Activated CD4-positive, alpha-beta memory T cell treated with anti-CD3 and anti-CD28 coated beads, Interleukin-2, amount 10 ng/mL, durations not matched to agents 7 days and 5 days (primary cell): ENCODE measurements at regions of chr17 and their contacts with region 1.

Region 1: GRCh38 chr17:48593840-48594537 is 410 bp upstream of the HOXB5 start:
- DNase-seq: peak; percentile 84
- H3K4me3 Mint-ChIP-seq: peak overlapping the region; percentile 71
- H3K27ac Mint-ChIP-seq: no peak overlapping the region
- H3K4me1 Mint-ChIP-seq: peaks cover 53% of the 10 kb centered on the region
- H3K27me3 Mint-ChIP-seq: peaks cover 86% of the 10 kb centered on the region

Region 2: GRCh38 chr17:48307814-48308411 is 286.1 kb before region 1 on chr17:
- CTCF ChIA-PET with region 1: interaction called, 27 read pairs
- POLR2A ChIA-PET with region 1: no interaction called
- DNase-seq: peak; percentile 54
- H3K4me3 Mint-ChIP-seq: no peak overlapping the region
- H3K27ac Mint-ChIP-seq: no peak overlapping the region
- H3K4me1 Mint-ChIP-seq: peaks cover 7% of the 10 kb centered on the region
- H3K27me3 Mint-ChIP-seq: no peaks in the 10 kb centered on the region

Region 3: DNA sequence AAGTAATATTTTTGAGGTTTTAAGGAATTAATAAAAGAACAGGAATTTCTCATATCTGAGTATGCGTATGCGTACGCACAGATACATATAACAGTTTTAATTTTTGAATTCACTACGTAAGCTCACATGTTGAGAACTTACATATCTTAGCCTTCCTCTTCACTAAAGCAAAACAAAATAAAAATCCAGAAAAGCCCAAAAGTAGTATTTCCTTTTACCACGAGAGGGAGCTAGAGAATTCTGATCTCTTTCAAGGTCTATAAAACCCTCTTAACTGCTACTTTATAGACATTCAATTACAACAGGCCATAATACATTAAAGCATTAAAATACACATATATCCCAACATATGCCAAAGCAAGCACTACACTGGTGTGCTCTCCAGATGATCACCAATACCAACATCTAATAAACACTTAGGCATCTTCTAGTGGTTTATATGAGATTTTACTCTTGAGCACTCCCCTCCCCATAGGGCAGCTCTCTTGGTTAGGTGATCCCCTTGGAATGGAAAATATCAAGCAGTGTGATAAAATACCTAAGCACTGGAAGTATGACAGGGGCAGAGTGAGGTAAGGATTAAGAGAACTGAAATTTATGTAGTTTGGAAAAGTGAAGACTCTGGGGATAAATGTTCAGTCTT is 258.0 kb before region 1 on chr17:
- CTCF ChIA-PET with region 1: interaction called, 62 read pairs
- POLR2A ChIA-PET with region 1: interaction called, 8 read pairs
- DNase-seq: no peak
- H3K4me3 Mint-ChIP-seq: no peak overlapping the region
- H3K27ac Mint-ChIP-seq: no peak overlapping the region
- H3K4me1 Mint-ChIP-seq: peaks cover 8% of the 10 kb centered on the region
- H3K27me3 Mint-ChIP-seq: no peaks in the 10 kb centered on the region

Region 4: GRCh38 chr17:48492401-48493298 is 101.3 kb before region 1 on chr17:
- CTCF ChIA-PET with region 1: interaction called, 20 read pairs
- POLR2A ChIA-PET with region 1: interaction called, 6 read pairs
- DNase-seq: peak; percentile 75
- H3K4me3 Mint-ChIP-seq: peak overlapping the region; percentile 60
- H3K27ac Mint-ChIP-seq: peak overlapping the region; percentile 50
- H3K4me1 Mint-ChIP-seq: peaks cover 47% of the 10 kb centered on the region
- H3K27me3 Mint-ChIP-seq: peaks cover 17% of the 10 kb centered on the region

Region 5: DNA sequence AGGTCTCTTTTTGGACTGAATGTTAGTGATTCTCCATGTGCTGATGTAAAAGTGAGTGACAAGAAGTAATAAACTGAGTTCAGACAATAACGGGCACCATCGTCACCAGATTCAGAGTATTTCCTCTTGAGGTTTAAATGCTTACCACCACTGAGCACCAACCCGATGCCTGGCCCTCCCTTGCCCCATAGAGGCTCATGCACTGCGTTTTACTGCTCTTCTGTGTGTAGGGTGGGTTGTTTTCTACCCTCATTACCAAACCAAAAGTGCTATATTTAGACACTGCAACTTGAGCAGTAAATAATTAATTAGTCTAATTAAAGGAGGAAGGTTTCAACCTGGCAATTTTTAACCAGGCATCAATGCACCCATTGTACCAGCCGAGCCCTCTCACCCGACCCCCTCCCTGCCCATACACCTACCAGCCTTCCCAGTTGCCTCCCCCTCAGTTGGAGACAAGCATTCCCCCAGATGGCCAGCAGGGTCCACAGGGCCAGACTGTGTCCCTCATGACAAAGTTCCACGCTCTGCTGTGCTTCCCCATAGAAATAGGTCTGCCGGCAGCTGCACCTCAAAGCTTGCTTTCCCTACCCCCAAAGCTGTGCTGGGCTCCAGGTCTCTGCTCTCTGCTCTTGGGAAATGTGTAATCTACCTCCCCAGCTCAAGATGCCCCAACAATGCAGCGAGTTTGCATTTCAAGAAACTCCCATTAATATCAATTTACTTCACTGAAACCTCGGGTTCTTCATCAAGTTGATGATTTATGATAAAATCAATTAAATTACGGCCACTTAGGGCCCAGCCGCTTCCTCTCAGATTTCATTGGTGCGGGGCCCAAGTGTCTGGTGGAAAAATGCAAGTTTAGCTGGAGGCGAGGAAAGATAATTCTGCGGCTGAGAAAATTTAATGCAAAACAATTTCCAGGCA is 31.8 kb before region 1 on chr17:
- CTCF ChIA-PET with region 1: no interaction called
- POLR2A ChIA-PET with region 1: no interaction called
- DNase-seq: no peak
- H3K4me3 Mint-ChIP-seq: no peak overlapping the region
- H3K27ac Mint-ChIP-seq: peak overlapping the region; percentile 16
- H3K4me1 Mint-ChIP-seq: peaks cover 19% of the 10 kb centered on the region
- H3K27me3 Mint-ChIP-seq: peaks cover 12% of the 10 kb centered on the region